Sigmoid colon (tissue), 7 donors: ENCODE measurements at regions of chr1 and their contacts with region 1.

Region 1: DNA sequence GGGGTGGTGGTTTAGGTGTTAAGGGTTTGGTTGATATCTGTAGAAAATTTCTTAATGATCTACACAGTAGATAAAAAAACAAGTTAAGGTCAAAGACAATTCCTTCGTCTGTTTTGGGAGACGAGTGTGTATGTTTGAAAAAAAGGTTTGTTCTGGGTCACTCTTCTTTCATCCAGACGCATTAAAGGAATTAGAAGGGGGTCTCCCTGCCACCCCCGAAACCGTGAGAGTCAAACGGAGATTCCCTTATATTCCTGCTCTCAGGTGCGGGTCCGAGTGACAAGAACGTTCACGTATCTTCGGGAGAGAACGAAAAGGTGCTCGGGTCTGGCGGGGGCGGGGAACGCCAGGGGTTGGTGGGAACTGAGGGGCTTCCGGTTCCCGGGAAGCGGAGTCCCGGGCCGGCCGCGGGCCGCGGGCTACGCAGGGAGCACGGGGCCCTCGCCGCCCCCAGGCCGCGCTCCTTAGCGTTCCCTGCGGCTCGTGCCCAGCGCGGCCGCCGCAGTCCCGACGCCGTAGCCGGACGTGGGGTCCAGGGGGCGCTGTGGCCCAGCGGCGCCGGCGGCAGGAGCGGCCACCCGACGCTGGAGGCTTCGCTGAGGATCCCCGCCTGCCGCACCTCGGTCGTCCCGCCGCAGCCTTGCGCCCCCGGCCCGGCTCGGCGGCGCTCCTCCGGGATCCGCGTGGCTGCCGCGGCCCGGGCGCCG is at the start of gene ZFYVE9:
- DNase-seq: peak; percentile 83
- H3K4me3 ChIP-seq: peak within 1 kb of the TSS; percentile 78 to 97 (median 94)
- H3K27ac ChIP-seq: peak within 1 kb of the TSS; percentile 96 to 99 (median 98)
- H3K4me1 ChIP-seq: peaks cover 0 to 39% (median 25%) of the 10 kb centered on the region in 4 donors
- H3K27me3 ChIP-seq: no peaks in the 10 kb centered on the region
- CTCF ChIP-seq: peak in 2 of 4 experiments; percentile 16 to 80
- EP300 ChIP-seq: no peak
- POLR2A ChIP-seq: no peak
- total RNA-seq, gene ZFYVE9: 25.9 to 36.3 (median 28.8) TPM

Region 2: GRCh38 chr1:52056163-52056936 is 85.3 kb before region 1 on chr1 and contains the start of gene BTF3L4:
- intact Hi-C with region 1: loop called (anchors 5 kb)
- DNase-seq: peak; percentile 98
- H3K4me3 ChIP-seq: peak within 1 kb of the TSS; percentile 77 to 96 (median 83)
- H3K27ac ChIP-seq: peak within 1 kb of the TSS; percentile 88 to 94 (median 88)
- H3K4me1 ChIP-seq: peaks cover 0 to 46% (median 33%) of the 10 kb centered on the region in 4 donors
- H3K27me3 ChIP-seq: no peaks in the 10 kb centered on the region
- CTCF ChIP-seq: no peak
- EP300 ChIP-seq: no peak
- POLR2A ChIP-seq: peak; percentile 25 to 69
- total RNA-seq, gene BTF3L4: 42.9 to 58.1 (median 51.1) TPM

Region 3: GRCh38 chr1:52296345-52296744 is 154.7 kb after region 1 on chr1:
- intact Hi-C with region 1: loop called (anchors 1 kb)
- DNase-seq: no peak
- H3K4me3 ChIP-seq: no peak overlapping the region
- H3K27ac ChIP-seq: no peak overlapping the region
- H3K4me1 ChIP-seq: no peaks in the 10 kb centered on the region
- H3K27me3 ChIP-seq: no peaks in the 10 kb centered on the region
- CTCF ChIP-seq: peak; percentile 40 to 65 (median 58)
- EP300 ChIP-seq: no peak
- POLR2A ChIP-seq: no peak

Region 4: DNA sequence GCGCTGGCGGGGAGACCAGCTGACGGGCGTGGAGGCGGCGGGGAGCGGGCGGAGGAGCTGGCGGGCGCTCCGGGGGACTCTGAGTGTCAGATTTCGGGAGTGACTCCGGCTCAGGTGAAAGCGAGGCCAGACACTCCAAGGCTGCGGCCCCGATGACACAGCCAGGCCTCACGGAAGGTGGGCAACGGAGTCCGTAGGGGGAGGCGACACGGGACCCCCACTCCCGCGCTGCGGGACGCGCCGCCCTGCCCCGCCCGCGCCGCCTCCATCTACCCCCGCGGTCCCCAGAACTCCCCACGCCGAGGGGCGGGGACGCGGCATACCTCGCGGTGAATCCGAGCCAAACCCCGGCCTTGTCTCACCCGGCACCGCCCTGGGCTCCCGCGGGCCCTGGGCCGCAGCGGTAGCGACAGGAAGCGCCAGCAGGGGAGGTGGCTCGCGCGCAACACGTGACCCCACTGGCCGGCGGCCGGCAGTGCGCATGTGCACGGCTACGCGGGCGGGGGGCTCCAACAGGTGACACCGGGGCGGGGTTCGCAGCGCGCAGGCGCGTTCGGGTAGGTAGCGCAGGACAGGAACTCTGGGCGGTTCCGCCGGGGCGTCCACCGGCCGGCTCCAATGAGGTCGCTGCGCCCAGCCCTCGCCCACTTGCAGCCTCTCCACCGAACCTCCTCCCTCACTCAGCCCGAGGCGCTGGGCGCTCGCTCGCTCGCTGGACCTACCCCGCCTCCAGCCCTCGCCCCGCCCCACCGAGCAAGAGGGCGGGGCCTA is 224.3 kb after region 1 on chr1 and contains the start of gene CC2D1B:
- intact Hi-C with region 1: loop called (anchors 5 kb)
- DNase-seq: peak; percentile 99
- H3K4me3 ChIP-seq: peak within 1 kb of the TSS; percentile 80 to 96 (median 95)
- H3K27ac ChIP-seq: peak within 1 kb of the TSS; percentile 93 to 96 (median 94)
- H3K4me1 ChIP-seq: peaks cover 0 to 24% (median 21%) of the 10 kb centered on the region in 4 donors
- H3K27me3 ChIP-seq: no peaks in the 10 kb centered on the region
- CTCF ChIP-seq: peak in 1 of 4 experiments; percentile 32
- EP300 ChIP-seq: peak in 1 of 4 donors; percentile 44
- POLR2A ChIP-seq: peak; percentile 78 to 79
- total RNA-seq, gene CC2D1B: 15.6 to 20.8 (median 18.2) TPM

Region 5: GRCh38 chr1:52404116-52404986 is 262.7 kb after region 1 on chr1 and contains the starts of genes ORC1 and PRPF38A:
- intact Hi-C with region 1: loop called (anchors 10 kb)
- DNase-seq: peak; percentile 99
- H3K4me3 ChIP-seq: peak within 1 kb of the TSS; percentile 56 to 87 (median 78)
- H3K27ac ChIP-seq: peak within 1 kb of the TSS; percentile 84 to 90 (median 89)
- H3K4me1 ChIP-seq: peaks cover 0 to 26% (median 23%) of the 10 kb centered on the region in 4 donors
- H3K27me3 ChIP-seq: no peaks in the 10 kb centered on the region
- CTCF ChIP-seq: peak; percentile 10 to 69 (median 48)
- EP300 ChIP-seq: no peak
- POLR2A ChIP-seq: peak; percentile 39 to 67
- total RNA-seq, gene ORC1: 0.36 to 0.95 TPM in 2 of 4 donors, not detected in the others
- total RNA-seq, gene PRPF38A: 12.4 to 20.0 (median 17.5) TPM